Left cardiac atrium (tissue), 4 donors: ENCODE measurements at regions of chr4 and their contacts with region 1.

Region 1: DNA sequence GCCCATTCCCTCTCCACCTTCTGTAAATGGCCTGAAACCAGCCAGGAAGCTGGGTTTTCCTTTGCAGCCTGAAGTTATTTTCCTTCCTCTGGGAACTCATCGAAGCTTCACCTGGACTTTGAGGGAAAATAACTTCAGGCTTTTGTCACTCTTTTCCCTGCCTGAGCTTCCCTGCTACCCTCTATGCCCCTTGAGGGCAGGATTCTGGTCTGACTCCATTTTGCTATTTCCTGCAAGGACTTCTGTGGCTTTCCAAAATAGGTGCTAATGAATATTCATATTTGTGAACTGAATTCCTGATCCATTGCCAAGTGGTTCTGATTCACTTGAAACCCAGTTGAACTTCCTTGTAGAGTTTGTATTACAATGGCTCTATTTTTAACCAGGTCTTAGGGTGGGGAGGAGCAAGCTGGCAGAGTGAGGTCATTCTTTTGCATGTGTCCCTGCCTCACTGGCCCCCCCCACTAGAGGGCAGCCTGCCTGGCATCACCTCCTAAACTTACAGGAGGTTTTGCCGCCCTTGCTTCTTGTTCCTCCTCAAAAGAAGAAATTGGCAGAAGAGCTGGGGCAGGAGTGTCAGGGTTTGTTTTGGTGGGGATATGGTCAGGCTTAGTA is 10.4 kb downstream of the PTTG2 start:
- DNase-seq: peak; percentile 78
- ATAC-seq: peak; percentile 88 to 90

Region 2: GRCh38 chr4:37889849-37890800 is 80.5 kb before region 1 on chr4:
- intact Hi-C with region 1: loop called in 1 of 2 experiments (anchors 5 kb)
- DNase-seq: peak; percentile 80
- ATAC-seq: peak; percentile 86 to 88